ENCODE measurements at regions of chr13 and their contacts with region 1.

Region 1: DNA sequence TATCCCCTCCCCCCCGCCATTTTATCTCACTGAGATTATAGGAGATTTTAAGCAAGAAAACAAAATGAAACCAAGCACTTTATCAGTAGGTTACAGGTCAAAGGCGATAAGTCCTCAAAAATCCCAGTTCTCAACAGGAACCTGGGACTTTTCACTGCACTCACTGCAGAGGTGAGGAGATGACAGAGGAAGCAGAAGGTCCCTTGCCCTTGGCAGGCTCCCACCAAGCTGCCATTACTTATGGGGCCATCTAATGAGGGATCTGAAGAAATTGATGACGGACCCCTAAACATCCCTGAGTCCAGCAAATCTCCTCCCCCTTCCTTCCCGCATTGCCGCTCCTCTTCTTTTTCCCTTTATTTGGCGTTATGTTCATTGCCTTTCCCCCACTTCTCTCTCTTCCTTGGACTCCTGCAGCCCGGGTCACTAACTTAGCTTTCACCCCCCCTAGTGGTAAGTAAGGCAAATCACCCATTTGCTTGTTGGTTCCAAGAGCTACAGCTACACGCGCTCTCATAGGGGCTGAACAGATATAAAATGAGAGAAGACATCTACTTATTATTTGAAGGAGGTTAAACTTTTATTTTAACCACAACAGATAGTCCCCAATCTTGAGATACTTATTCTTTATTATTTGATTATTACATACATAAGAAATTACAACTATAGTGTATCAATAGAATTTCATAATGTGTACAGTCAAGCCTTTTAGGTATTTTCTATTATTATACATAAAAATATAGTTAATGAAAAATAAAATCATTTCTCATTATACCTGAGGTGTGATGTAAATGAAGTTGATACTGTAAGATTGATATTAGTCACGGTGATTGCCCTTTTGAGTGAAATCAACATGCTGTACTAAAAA is 52.0 kb upstream of the ARGLU1 start:
- DNase-seq: peak; percentile 24
- ATAC-seq: peak; percentile 95
- H3K4me3 Mint-ChIP-seq: no peak overlapping the region
- H3K27ac Mint-ChIP-seq: no peak overlapping the region
- H3K4me1 Mint-ChIP-seq: peaks cover 19% of the 10 kb centered on the region
- H3K27me3 Mint-ChIP-seq: no peaks in the 10 kb centered on the region; the same call in 1 of the 2 replicates
- CTCF ChIP-seq: peak; percentile 64

Region 2: DNA sequence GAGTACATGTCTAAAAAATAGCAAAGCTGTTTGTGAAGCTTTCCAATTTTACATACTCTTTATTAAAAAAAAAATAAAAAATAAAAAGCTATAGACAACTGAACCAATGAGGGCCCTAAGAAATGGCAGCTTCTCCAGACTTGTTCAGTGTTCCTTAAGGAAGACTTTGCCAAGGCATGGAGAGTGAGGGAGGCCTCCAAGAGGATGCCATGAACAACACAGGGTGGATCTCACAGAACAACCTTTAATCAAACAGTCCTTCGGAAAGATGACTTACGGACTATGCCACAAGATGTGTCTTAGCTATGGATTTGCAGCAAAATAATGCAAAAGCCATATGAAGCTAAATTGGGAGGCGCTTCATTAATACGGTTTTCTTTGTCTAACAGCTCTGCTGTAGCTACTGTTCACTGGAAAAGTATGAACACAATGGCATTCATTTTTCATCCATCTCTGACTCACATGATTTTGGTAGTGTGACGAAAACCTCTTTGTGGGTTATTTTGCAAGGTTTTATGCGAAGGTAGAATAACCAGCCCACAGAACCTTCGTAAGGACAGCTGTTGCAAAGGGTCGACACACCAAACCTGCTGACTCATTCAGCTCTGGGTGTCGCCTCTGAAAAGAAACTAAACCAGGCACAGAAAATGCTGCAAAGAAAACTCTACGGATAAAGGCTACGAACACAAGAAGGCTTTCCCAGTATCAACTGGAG is 112.2 kb before region 1 on chr13:
- CTCF ChIA-PET with region 1: no interaction called
- POLR2A ChIA-PET with region 1: no interaction called
- DNase-seq: no peak
- ATAC-seq: 0 out of 2 replicates have a peak, but pooled peaks have one; percentile 28
- H3K4me3 Mint-ChIP-seq: no peak overlapping the region
- H3K27ac Mint-ChIP-seq: peak overlapping the region; percentile 97
- H3K4me1 Mint-ChIP-seq: peaks cover 26% of the 10 kb centered on the region
- H3K27me3 Mint-ChIP-seq: no peaks in the 10 kb centered on the region
- CTCF ChIP-seq: no peak

Region 3: GRCh38 chr13:106536244-106537034 is 83.5 kb before region 1 on chr13:
- CTCF ChIA-PET with region 1: interaction called, 28 read pairs
- POLR2A ChIA-PET with region 1: interaction called, 3 read pairs
- DNase-seq: peak; percentile 94
- ATAC-seq: peak; percentile 17
- H3K4me3 Mint-ChIP-seq: peak overlapping the region; percentile 81
- H3K27ac Mint-ChIP-seq: peak overlapping the region; percentile 72; the same call in 1 of the 2 replicates
- H3K4me1 Mint-ChIP-seq: peaks cover 37% of the 10 kb centered on the region
- H3K27me3 Mint-ChIP-seq: peaks cover 10% of the 10 kb centered on the region
- CTCF ChIP-seq: peak; percentile 95

Region 4: GRCh38 chr13:106567474-106568298 is 52.2 kb before region 1 on chr13 and contains the start of gene ARGLU1:
- CTCF ChIA-PET with region 1: interaction called, 13 read pairs
- POLR2A ChIA-PET with region 1: no interaction called
- DNase-seq: peak; percentile 95
- ATAC-seq: peak; percentile 62
- H3K4me3 Mint-ChIP-seq: peak within 1 kb of the TSS; percentile 99
- H3K27ac Mint-ChIP-seq: peak within 1 kb of the TSS; percentile 97
- H3K4me1 Mint-ChIP-seq: peaks cover 49% of the 10 kb centered on the region
- H3K27me3 Mint-ChIP-seq: no peaks in the 10 kb centered on the region
- CTCF ChIP-seq: no peak
- total RNA-seq, gene ARGLU1: 115 to 130 TPM (median 125 TPM) in 3 replicates

Region 5: DNA sequence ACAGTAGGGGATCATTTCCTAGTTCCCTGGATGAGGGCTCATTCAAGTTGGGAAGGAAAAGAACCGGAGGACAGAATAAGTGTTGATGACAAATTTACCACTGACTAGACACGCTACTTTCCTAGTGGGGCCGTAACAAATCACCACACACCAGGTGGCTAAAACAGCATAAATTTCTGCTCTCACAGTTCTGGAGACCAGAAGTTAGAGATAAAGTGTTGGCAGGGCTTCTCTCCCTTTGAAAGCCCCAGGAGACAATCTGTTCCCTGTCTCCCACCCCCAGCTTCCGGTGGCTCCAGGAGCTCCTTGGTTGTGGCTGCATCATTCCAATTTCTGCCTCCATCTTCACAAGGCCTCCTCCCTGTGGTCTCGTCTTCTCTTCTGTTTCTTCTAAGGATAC is 13.4 kb after region 1 on chr13:
- CTCF ChIA-PET with region 1: interaction called, 17 read pairs
- POLR2A ChIA-PET with region 1: no interaction called
- DNase-seq: no peak
- ATAC-seq: no peak
- H3K4me3 Mint-ChIP-seq: no peak overlapping the region
- H3K27ac Mint-ChIP-seq: no peak overlapping the region
- H3K4me1 Mint-ChIP-seq: no peaks in the 10 kb centered on the region
- H3K27me3 Mint-ChIP-seq: no peaks in the 10 kb centered on the region
- CTCF ChIP-seq: no peak